ENCODE measurements at regions of chr5 and their contacts with region 1.

Region 1: GRCh38 chr5:161805099-161805498 is 42.8 kb upstream of the GABRA1 start:
- DNase-seq: no peak
- ATAC-seq: no peak

Region 2: DNA sequence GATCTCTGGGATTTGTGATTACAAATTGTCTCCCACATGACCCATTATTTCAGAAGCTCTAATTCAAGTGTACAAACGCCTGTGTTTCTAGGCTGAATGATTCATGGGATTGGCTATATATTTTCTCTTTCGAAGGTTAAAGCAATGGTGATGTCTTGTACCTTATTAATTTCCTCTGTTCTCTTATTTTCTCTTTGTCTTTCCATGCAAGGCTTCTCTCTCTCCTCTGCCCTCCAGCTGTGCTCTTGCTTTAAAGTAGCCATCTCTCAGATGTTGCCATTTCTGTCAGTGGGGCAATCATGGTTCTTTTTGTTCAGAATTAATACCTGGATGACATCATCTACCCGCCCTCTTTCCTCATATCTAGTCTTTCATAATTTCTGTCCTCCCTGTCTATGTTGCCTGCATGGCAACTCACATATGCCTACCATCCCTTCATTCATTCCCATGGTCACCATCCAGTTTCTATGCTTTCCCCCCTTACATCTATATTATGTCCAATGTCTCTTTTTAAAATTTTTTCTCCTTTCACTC is 768.7 kb before region 1 on chr5:
- intact Hi-C with region 1: loop called (anchors 5 kb)
- DNase-seq: no peak
- ATAC-seq: no peak

Region 3: GRCh38 chr5:162230348-162230747 is 425.2 kb after region 1 on chr5:
- intact Hi-C with region 1: no loop called
- DNase-seq: no peak
- ATAC-seq: no peak

Region 4: GRCh38 chr5:162410365-162410764 is 605.3 kb after region 1 on chr5:
- intact Hi-C with region 1: no loop called
- DNase-seq: no peak
- ATAC-seq: no peak